Thyroid gland (tissue), 4 donors: ENCODE measurements at regions of chr15 and their contacts with region 1.

Region 1: DNA sequence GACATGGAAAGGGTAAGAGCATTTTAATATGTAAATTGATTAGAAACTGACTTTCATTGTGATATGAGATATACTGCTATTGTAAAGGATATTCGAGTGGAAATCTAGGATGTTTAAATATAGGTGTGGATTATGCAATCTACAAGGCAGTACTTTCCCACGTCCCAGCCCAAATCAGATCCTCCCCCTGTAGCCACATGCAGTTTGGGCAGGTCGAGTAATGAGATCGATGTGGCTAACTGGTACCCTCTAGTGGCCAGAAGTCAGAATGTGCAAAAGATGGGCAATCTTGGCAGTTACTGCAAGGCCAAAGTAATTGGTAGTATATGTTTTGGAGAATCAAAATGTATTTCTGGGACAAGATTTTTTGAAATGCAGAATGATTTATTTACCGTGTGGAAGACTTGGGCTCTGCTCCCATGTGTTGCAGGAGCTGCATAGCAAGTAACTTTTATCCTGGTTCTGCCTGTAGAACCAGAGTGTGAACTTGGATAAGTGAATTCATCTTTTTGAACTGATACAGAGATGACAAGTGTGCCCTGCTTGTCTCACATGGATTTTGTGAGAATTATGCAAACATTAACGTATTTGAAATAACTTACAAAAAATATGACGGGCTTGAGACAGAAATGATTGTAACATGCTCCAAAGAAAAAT is 94.5 kb upstream of the ADAMTSL3 start:
- DNase-seq: peak; percentile 46 to 52
- H3K4me3 ChIP-seq: no peak overlapping the region
- H3K27ac ChIP-seq: no peak overlapping the region
- H3K4me1 ChIP-seq: no peaks in the 10 kb centered on the region
- H3K27me3 ChIP-seq: no peaks in the 10 kb centered on the region
- CTCF ChIP-seq: peak; percentile 42 to 76 (median 66)
- POLR2A ChIP-seq: no peak

Region 2: DNA sequence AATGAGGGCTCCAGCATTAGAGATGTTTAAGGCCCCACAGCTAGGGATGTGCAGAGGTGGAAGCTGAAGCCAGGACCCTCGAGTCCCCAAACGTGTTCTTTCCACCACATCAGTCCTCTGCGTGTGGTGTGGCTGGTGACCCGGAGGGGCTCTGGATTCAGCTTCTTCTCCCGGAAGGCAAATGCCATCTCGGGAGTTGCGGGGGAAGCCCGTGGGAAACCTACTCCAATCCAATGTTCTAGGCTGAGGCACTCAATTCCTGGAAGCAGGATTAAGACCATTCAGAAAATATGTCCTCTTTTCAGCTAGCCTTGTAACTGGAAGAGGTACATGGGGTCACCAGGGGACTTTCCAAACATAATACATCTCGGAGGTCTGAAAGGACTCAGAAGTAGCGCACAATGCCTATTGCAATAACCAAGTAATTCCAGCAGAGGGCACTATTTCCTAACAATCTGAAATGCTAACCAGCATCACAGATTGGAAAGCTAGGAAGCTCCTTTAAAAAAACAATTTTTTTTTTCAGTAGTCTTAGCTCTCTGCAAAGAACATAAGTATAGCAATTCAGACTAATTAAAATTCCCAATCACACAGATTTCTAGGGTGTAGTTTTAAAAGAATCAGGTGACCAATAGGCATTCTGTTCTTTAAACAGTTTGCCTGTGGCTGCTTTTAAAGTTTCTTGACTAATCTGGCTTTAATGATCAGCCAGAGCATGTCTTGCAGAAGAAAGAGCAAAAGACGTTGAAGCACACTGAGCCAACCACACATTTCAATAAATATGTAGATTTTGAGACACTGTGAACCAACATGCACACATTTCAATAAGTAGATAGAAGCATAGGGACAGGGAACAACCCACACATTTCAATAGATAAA is 311.0 kb before region 1 on chr15:
- intact Hi-C with region 1: loop called (anchors 10 kb)
- DNase-seq: peak; percentile 4 to 5
- H3K4me3 ChIP-seq: no peak overlapping the region
- H3K27ac ChIP-seq: no peak overlapping the region
- H3K4me1 ChIP-seq: peaks cover 0 to 4% of the 10 kb centered on the region in 2 donors
- H3K27me3 ChIP-seq: no peaks in the 10 kb centered on the region
- CTCF ChIP-seq: peak; percentile 72 to 95 (median 88)
- POLR2A ChIP-seq: no peak

Region 3: GRCh38 chr15:83436458-83437158 is 122.8 kb before region 1 on chr15:
- intact Hi-C with region 1: loop called (anchors 5 kb)
- DNase-seq: no peak
- H3K4me3 ChIP-seq: no peak overlapping the region
- H3K27ac ChIP-seq: no peak overlapping the region
- H3K4me1 ChIP-seq: peaks cover 0 to 8% of the 10 kb centered on the region in 2 donors
- H3K27me3 ChIP-seq: no peaks in the 10 kb centered on the region
- CTCF ChIP-seq: no peak
- POLR2A ChIP-seq: no peak

Region 4: GRCh38 chr15:83498801-83499200 is 60.6 kb before region 1 on chr15:
- intact Hi-C with region 1: no loop called
- DNase-seq: no peak
- H3K4me3 ChIP-seq: no peak overlapping the region
- H3K27ac ChIP-seq: no peak overlapping the region
- H3K4me1 ChIP-seq: no peaks in the 10 kb centered on the region
- H3K27me3 ChIP-seq: no peaks in the 10 kb centered on the region
- CTCF ChIP-seq: no peak
- POLR2A ChIP-seq: no peak

Region 5: DNA sequence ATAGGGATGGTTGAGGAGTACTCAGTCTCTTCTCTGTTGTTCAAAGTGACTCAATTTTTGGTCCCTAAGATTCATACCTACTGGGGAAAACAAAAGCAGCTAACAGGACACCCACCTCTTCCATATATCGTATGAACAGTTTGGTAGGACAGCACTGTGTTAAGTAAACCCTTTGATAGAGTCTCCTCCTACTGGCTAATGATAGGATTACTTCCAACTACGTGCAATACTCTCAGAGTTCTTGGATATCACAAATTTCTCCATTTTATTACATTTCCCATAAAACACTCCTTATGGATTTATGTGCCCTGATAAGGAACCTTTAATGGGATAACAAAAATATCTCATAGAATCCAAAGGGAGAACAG is 475.9 kb after region 1 on chr15:
- intact Hi-C with region 1: loop called (anchors 10 kb)
- DNase-seq: no peak
- H3K4me3 ChIP-seq: no peak overlapping the region
- H3K27ac ChIP-seq: no peak overlapping the region
- H3K4me1 ChIP-seq: no peaks in the 10 kb centered on the region
- H3K27me3 ChIP-seq: no peaks in the 10 kb centered on the region
- CTCF ChIP-seq: peak in 3 of 6 experiments; percentile 8 to 21 (median 19)
- POLR2A ChIP-seq: no peak